Mammary epithelial cell (primary cell): ENCODE measurements at regions of chrX and their contacts with region 1.

Region 1: GRCh38 chrX:644304-645281 is 14.0 kb downstream of the SHOX start:
- DNase-seq: no peak
- H3K4me3 ChIP-seq: no peak overlapping the region
- H3K27ac ChIP-seq: no peak overlapping the region
- H3K4me1 ChIP-seq: no peaks in the 10 kb centered on the region
- H3K27me3 ChIP-seq: peaks cover 2% of the 10 kb centered on the region
- CTCF ChIP-seq: no peak

Region 2: GRCh38 chrX:683572-683971 is 39.0 kb after region 1 on chrX:
- CTCF ChIA-PET with region 1: no interaction called
- dilution Hi-C with region 1: loop called (anchors 5 kb)
- in situ Hi-C with region 1: no loop called
- intact Hi-C with region 1: no loop called
- DNase-seq: no peak
- H3K4me3 ChIP-seq: no peak overlapping the region
- H3K27ac ChIP-seq: no peak overlapping the region
- H3K4me1 ChIP-seq: no peaks in the 10 kb centered on the region
- H3K27me3 ChIP-seq: no peaks in the 10 kb centered on the region
- CTCF ChIP-seq: no peak